Sigmoid colon (tissue), 7 donors: ENCODE measurements at regions of chr3 and their contacts with region 1.

Region 1: DNA sequence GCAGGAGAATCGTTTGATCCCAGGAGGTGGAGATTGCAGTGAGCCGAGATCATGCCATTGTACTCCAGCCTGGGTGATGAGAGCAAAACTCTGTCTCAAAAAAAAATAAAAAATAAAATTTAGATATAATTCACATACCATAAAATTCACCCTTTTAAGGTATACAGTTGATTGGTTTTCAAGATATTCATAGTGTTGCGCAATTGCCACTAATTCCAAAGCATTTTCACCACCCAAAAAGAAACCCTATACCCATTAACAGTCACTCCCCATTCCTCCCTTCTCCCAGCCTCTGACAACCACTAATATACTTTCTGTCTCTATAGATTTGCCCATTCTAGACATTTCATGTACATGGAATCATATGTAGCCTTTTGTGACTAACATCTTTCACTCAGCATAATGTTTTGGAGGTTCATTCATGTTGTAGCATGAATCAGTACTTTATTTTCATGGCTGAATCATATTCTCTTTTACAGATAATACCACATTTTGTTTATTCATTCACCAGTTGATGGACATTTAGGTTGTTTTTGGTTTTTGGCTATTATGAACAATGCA is 116.7 kb downstream of the RASA2 start:
- DNase-seq: no peak
- H3K4me3 ChIP-seq: no peak overlapping the region
- H3K27ac ChIP-seq: peak overlapping the region in 3 of 4 donors; percentile 85 to 90 (median 87)
- H3K4me1 ChIP-seq: peaks cover 0 to 37% (median 21%) of the 10 kb centered on the region in 4 donors
- H3K27me3 ChIP-seq: no peaks in the 10 kb centered on the region
- CTCF ChIP-seq: no peak
- EP300 ChIP-seq: no peak
- POLR2A ChIP-seq: no peak

Region 2: GRCh38 chr3:141644931-141645330 is 41.4 kb after region 1 on chr3:
- intact Hi-C with region 1: loop called (anchors 5 kb)
- DNase-seq: peak; percentile 87
- H3K4me3 ChIP-seq: no peak overlapping the region
- H3K27ac ChIP-seq: peak overlapping the region in 1 of 4 donors; percentile 21
- H3K4me1 ChIP-seq: peaks cover 0 to 54% (median 39%) of the 10 kb centered on the region in 4 donors
- H3K27me3 ChIP-seq: no peaks in the 10 kb centered on the region
- CTCF ChIP-seq: peak; percentile 24 to 51 (median 40)
- EP300 ChIP-seq: no peak
- POLR2A ChIP-seq: no peak